PC-9 (cell line): ENCODE measurements at regions of chr13 and their contacts with region 1.

Region 1: GRCh38 chr13:36736119-36736726 is 62.4 kb downstream of the SERTM1 start:
- DNase-seq: peak in 1 of 2 experiments; percentile 11
- H3K4me3 ChIP-seq: no peak overlapping the region
- H3K27ac ChIP-seq: no peak overlapping the region
- H3K4me1 ChIP-seq: 0 out of 2 replicates have a peak, but pooled peaks cover 5% of the 10 kb centered on the region
- H3K27me3 ChIP-seq: no peaks in the 10 kb centered on the region
- CTCF ChIP-seq: peak; percentile 91

Region 2: GRCh38 chr13:36818804-36819738 is 82.8 kb after region 1 on chr13 and contains the start of gene RFXAP:
- CTCF ChIA-PET with region 1: no interaction called
- POLR2A ChIA-PET with region 1: no interaction called
- intact Hi-C with region 1: loop called (anchors 1 kb)
- DNase-seq: peak; percentile 61 to 80
- H3K4me3 ChIP-seq: peak within 1 kb of the TSS; percentile 90
- H3K27ac ChIP-seq: no peak within 1 kb of the TSS
- H3K4me1 ChIP-seq: peaks cover 16% of the 10 kb centered on the region
- H3K27me3 ChIP-seq: no peaks in the 10 kb centered on the region
- CTCF ChIP-seq: no peak
- total RNA-seq, gene RFXAP: 3.9 and 5.6 TPM in 2 replicates